ENCODE measurements at regions of chr1 and their contacts with region 1.

Region 1: DNA sequence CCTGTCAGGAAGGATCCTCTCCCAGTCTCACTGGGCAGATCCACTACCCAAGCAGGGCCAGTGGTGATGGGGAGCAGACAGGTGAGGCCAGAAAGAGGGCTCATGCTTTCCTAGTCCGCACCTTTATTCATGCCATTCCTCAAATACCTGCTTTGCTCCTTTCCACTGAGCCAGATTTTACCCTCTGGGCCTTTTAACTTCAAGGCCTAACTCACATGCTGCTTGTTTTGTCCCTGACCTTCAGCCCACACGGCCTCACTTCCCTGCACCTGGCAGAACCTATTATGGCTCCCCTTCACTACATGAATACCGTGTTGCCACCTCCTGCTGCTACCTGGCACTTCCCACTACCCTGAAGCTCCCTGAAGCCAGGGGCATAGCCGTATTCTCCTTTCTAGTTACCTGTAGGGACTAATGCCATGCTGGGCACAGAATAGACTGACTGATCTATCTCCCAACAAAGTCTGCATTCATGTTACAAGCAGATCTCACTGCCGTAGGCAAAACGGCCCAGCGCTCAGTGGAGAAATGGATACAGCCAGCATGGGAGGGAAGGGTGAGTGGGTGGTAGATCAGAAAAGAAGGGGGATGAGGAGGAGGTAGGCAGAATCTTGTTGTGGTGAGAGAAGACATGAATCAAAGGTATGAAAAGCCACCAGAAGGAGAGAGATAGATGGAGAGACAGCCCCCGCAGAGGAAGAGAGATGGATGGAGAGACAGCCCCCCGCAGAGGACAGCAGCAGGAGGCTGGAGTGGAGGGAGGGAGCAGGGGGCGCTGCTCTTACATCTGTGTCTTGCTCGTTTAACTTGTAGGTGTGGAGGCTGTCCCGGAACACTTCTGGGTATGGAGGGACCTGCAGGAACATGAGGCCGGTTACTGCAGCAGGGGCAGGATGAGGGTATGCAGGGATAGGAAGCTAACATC is 36.2 kb upstream of the GOLT1A start:
- DNase-seq: no peak
- H3K4me3 ChIP-seq: no peak overlapping the region
- H3K27ac ChIP-seq: no peak overlapping the region
- H3K4me1 ChIP-seq: no peaks in the 10 kb centered on the region
- H3K27me3 ChIP-seq: no peaks in the 10 kb centered on the region
- CTCF ChIP-seq: no peak

Region 2: GRCh38 chr1:204331847-204332487 is 81.9 kb after region 1 on chr1:
- CTCF ChIA-PET with region 1: no interaction called
- dilution Hi-C with region 1: loop called (anchors 5 kb)
- in situ Hi-C with region 1: no loop called
- intact Hi-C with region 1: no loop called
- DNase-seq: no peak
- H3K4me3 ChIP-seq: no peak overlapping the region
- H3K27ac ChIP-seq: no peak overlapping the region
- H3K4me1 ChIP-seq: no peaks in the 10 kb centered on the region
- H3K27me3 ChIP-seq: no peaks in the 10 kb centered on the region
- CTCF ChIP-seq: no peak

Measured in mammary epithelial cell (primary cell).